ENCODE measurements at regions of chr6 and their contacts with region 1.

Region 1: GRCh38 chr6:82145926-82146452 is 101.6 kb downstream of the IBTK start:
- DNase-seq: no peak
- ATAC-seq: no peak
- H3K4me3 Mint-ChIP-seq: no peak overlapping the region
- H3K27ac Mint-ChIP-seq: no peak overlapping the region
- H3K4me1 Mint-ChIP-seq: no peaks in the 10 kb centered on the region
- H3K27me3 Mint-ChIP-seq: no peaks in the 10 kb centered on the region
- CTCF ChIP-seq: no peak

Region 2: GRCh38 chr6:82172594-82172993 is 26.6 kb after region 1 on chr6:
- CTCF ChIA-PET with region 1: no interaction called
- POLR2A ChIA-PET with region 1: no interaction called
- intact Hi-C with region 1: loop called (anchors 1 kb)
- DNase-seq: no peak
- ATAC-seq: no peak
- H3K4me3 Mint-ChIP-seq: no peak overlapping the region
- H3K27ac Mint-ChIP-seq: no peak overlapping the region
- H3K4me1 Mint-ChIP-seq: no peaks in the 10 kb centered on the region
- H3K27me3 Mint-ChIP-seq: no peaks in the 10 kb centered on the region
- CTCF ChIP-seq: no peak

Measured in activated B cell treated with CpG ODN at 0.5 μM for 24 hours (primary cell).